ENCODE measurements at regions of chr2 and their contacts with region 1.

Region 1: DNA sequence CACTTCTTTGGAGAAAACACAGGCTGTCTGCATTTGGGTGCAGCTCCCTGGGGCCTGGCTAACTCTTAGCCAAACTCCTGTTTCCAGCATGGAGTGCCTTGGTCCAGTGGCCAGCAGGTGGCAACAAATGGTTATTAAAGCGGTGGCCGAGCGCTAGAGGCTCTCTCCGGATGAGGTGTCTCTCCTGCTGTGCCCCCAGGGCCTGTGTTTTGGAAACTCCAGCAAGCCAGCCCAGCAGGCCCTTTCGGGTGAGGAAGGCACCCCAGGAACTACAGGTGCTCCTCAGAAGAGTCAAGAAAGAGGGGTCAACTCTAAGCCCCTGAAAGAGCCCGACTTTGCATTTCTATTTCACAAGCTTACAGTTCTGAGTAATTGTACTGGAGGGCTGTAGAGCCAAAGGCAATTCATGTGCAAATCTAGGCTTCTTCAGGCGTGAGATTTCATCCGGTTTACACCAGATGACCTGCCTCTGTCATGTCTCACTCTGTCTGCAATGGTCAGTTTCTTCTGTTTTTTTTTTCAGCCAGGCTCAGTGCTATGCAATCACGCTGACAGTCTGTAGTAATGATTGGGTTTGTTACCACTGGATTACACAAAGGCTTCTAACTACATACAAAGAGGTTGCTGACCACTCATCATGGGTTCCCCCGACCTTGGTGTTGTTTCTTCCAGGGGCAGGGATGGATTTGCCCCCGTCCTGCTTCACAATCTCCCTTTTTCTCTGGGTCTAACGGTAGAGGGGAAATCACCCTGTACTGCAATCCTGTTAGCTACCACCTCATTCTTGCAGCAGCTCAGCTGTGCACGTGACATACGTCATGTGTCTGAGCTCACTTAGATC is 7.6 kb upstream of the CHRNA1 start:
- DNase-seq: peak; percentile 71
- H3K4me3 ChIP-seq: no peak overlapping the region
- H3K27ac ChIP-seq: no peak overlapping the region
- H3K4me1 ChIP-seq: no peaks in the 10 kb centered on the region
- H3K27me3 ChIP-seq: no peaks in the 10 kb centered on the region
- CTCF ChIP-seq: peak; percentile 84
- POLR2A ChIP-seq: no peak

Region 2: DNA sequence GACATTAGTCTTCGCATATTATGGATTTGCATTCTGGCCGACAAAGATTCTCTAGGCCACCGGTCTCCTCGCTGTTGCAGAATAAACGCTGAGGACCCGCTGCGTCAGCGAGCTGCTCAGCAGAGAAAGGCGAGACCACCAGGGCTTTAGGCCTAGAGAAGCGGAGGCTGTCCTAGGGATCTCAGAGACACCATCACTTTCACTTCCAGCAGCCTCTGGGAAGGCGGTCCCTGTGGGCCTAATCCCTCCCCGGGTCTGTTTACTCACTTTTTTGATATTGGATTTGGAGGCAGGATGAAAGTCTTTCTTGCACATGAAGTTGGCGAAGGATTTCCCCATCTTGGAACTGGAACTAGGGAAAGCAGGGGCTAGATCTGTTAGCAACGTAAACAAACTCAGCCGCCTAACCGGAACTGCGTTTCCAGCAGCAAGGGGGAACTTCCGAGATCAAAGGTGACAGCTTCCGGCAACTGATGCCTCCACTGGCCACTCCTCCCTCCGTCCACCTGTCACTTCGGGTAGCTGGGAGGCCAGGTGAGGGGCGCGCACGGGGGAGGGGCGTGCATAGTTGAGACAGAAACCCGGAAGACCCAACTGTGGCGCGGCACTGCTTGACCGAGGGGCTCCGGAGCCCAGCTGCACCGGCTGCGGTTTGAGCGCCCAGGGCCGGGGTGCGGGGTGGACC is 376.4 kb before region 1 on chr2 and contains the start of gene SCRN3:
- CTCF ChIA-PET with region 1: no interaction called
- POLR2A ChIA-PET with region 1: no interaction called
- dilution Hi-C with region 1: no loop called
- intact Hi-C with region 1: no loop called
- DNase-seq: peak; percentile 85
- H3K4me3 ChIP-seq: peak within 1 kb of the TSS; percentile 69 to 91 (median 77)
- H3K27ac ChIP-seq: peak within 1 kb of the TSS; percentile 48
- H3K4me1 ChIP-seq: peaks cover 13% of the 10 kb centered on the region
- H3K27me3 ChIP-seq: no peaks in the 10 kb centered on the region
- CTCF ChIP-seq: no peak
- POLR2A ChIP-seq: peak; percentile 49
- total RNA-seq, gene SCRN3: 21.7 and 24.0 TPM in 2 replicates

Region 3: GRCh38 chr2:174748948-174749347 is 22.9 kb before region 1 on chr2:
- CTCF ChIA-PET with region 1: interaction called, 97 read pairs
- POLR2A ChIA-PET with region 1: no interaction called
- dilution Hi-C with region 1: no loop called
- intact Hi-C with region 1: loop called (anchors 1 kb)
- DNase-seq: peak; percentile 66
- H3K4me3 ChIP-seq: no peak overlapping the region
- H3K27ac ChIP-seq: no peak overlapping the region
- H3K4me1 ChIP-seq: no peaks in the 10 kb centered on the region
- H3K27me3 ChIP-seq: peaks cover 0 to 2% of the 10 kb centered on the region in 2 experiments
- CTCF ChIP-seq: peak; percentile 67 to 74
- POLR2A ChIP-seq: no peak

Region 4: DNA sequence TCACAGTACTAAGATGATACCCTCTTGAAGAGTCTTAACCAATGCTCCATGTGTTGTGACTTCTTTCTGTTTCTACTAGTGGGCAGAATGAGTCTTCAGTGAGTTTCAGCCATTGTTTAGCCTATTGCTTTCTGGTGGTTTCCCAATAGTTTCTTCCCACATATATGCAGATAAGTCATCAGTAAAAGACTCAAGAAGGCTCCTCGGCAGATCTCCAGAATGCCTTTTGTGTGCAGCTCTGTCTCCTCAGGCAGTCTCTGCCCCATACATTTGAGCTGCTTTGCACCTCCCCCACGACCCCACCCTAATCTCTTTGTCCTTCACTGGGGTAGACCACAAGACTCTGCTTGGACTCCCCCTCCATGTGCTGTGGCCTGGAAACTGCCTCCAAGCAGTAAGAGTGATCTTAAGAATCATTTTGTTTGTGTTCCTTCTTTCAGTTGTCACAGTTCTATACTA is 64.0 kb after region 1 on chr2:
- CTCF ChIA-PET with region 1: interaction called, 19 read pairs
- POLR2A ChIA-PET with region 1: no interaction called
- dilution Hi-C with region 1: no loop called
- intact Hi-C with region 1: no loop called
- DNase-seq: no peak
- H3K4me3 ChIP-seq: no peak overlapping the region
- H3K27ac ChIP-seq: no peak overlapping the region
- H3K4me1 ChIP-seq: peaks cover 10% of the 10 kb centered on the region
- H3K27me3 ChIP-seq: no peaks in the 10 kb centered on the region
- CTCF ChIP-seq: no peak
- POLR2A ChIP-seq: no peak

Region 5: DNA sequence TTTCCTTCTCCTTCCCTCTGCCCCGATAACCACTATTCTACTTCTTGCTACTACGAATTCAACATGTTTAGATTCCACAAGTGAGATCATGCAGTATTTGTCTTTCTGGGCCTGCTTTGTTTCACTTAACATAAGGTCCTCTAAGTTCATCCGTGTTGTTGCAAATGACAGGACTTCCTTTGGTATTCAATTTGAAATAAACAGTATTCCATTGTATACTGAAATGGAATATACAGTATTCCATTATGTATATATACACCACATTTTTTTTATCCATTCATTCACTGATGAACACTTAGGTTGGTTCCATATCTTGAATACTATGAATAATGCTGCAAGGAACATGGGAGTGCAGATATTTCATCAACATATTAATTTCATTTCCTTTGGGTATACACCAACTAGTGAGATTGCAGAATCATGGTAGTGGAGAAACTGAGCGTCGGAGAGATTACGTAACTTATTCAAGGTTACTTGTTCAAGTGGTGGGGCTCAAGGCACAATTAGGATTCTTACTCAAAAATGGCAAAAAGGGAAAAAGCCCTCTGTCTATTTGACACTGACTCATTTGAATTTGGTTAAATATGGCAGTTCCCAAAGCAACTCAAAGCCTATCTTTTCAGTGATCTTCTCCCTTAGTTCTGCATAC is 148.2 kb after region 1 on chr2:
- CTCF ChIA-PET with region 1: interaction called, 11 read pairs
- POLR2A ChIA-PET with region 1: no interaction called
- dilution Hi-C with region 1: no loop called
- intact Hi-C with region 1: no loop called
- DNase-seq: no peak
- H3K4me3 ChIP-seq: no peak overlapping the region
- H3K27ac ChIP-seq: no peak overlapping the region
- H3K4me1 ChIP-seq: no peaks in the 10 kb centered on the region
- H3K27me3 ChIP-seq: no peaks in the 10 kb centered on the region
- CTCF ChIP-seq: no peak
- POLR2A ChIP-seq: no peak

Region 6: DNA sequence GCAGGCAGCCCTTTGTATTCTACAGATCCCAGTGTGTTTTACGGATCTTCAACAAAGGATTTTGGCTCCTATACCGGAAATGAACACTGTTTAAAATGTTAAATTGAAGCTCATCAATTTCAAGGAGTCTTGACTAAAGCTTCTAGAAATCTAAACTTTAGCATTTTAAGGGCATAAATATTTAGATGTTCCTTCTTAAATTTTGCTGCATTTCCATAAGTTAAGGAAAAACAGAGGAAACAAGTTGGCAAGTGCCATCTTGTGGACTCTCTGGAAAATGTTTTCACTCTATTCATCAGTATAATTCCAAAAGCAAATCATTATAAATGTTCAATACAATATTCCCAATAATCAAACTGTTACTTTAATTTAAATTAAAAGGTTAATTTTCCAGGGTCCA is 213.8 kb after region 1 on chr2:
- CTCF ChIA-PET with region 1: interaction called, 584 read pairs
- POLR2A ChIA-PET with region 1: no interaction called
- dilution Hi-C with region 1: loop called (anchors 10 kb)
- intact Hi-C with region 1: loop called (anchors 1 kb)
- DNase-seq: peak; percentile 55
- H3K4me3 ChIP-seq: no peak overlapping the region
- H3K27ac ChIP-seq: no peak overlapping the region
- H3K4me1 ChIP-seq: no peaks in the 10 kb centered on the region
- H3K27me3 ChIP-seq: no peaks in the 10 kb centered on the region
- CTCF ChIP-seq: peak; percentile 21 to 36
- POLR2A ChIP-seq: no peak

Region 7: DNA sequence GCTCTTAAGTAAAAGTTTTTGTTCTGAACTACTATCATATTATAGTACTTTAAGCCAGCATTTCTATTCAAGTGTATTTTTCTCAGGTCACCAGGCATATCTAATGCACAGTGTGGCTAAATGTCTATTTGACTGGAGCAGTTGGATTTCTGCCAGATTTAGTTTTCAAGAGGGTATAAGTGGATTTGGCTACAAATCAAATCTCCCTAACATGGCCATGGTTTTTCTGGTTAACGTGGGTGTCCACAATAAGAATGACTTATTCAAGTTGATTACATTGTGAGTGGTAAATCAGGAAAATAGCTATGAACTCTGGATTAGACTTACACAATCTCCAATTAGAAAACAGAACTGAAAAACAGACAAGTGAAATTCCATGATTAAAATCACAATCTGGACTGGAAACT is 239.0 kb after region 1 on chr2:
- CTCF ChIA-PET with region 1: interaction called, 35 read pairs
- POLR2A ChIA-PET with region 1: no interaction called
- dilution Hi-C with region 1: no loop called
- intact Hi-C with region 1: no loop called
- DNase-seq: peak; percentile 59
- H3K4me3 ChIP-seq: no peak overlapping the region
- H3K27ac ChIP-seq: no peak overlapping the region
- H3K4me1 ChIP-seq: peaks cover 29% of the 10 kb centered on the region
- H3K27me3 ChIP-seq: peaks cover 0 to 3% of the 10 kb centered on the region in 2 experiments
- CTCF ChIP-seq: no peak
- POLR2A ChIP-seq: no peak

Region 8: GRCh38 chr2:175251425-175252041 is 479.7 kb after region 1 on chr2:
- CTCF ChIA-PET with region 1: interaction called, 11 read pairs
- POLR2A ChIA-PET with region 1: no interaction called
- dilution Hi-C with region 1: no loop called
- intact Hi-C with region 1: no loop called
- DNase-seq: peak; percentile 48
- H3K4me3 ChIP-seq: no peak overlapping the region
- H3K27ac ChIP-seq: no peak overlapping the region
- H3K4me1 ChIP-seq: no peaks in the 10 kb centered on the region
- H3K27me3 ChIP-seq: peaks cover 12 to 16% of the 10 kb centered on the region in 2 experiments
- CTCF ChIP-seq: peak; percentile 46 to 57
- POLR2A ChIP-seq: no peak